ENCODE measurements at regions of chr11 and their contacts with region 1.

Region 1: DNA sequence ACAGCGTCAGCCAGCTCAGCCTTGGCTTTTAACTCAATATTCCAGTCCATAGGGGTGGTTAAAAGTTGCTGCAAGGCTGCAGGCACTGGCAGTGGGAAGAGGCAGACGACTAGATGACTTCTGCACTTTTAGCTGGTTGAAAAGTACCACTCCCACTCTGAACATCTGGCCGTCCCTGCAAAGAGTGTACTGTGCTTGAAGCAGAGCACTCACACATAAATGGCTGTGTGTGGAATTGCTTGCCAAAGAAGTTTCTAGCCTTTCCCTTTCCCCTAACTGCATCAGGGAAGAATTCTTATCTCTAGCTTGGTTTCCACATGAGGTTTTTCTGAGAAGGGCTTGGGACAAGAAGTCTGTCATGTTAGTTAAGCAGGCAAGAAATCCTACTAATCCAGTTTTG is 5.1 kb upstream of the PHLDB1 start:
- DNase-seq: no peak
- H3K4me3 ChIP-seq: no peak overlapping the region
- H3K27ac ChIP-seq: no peak overlapping the region
- H3K4me1 ChIP-seq: no peaks in the 10 kb centered on the region
- H3K27me3 ChIP-seq: no peaks in the 10 kb centered on the region
- CTCF ChIP-seq: no peak

Region 2: DNA sequence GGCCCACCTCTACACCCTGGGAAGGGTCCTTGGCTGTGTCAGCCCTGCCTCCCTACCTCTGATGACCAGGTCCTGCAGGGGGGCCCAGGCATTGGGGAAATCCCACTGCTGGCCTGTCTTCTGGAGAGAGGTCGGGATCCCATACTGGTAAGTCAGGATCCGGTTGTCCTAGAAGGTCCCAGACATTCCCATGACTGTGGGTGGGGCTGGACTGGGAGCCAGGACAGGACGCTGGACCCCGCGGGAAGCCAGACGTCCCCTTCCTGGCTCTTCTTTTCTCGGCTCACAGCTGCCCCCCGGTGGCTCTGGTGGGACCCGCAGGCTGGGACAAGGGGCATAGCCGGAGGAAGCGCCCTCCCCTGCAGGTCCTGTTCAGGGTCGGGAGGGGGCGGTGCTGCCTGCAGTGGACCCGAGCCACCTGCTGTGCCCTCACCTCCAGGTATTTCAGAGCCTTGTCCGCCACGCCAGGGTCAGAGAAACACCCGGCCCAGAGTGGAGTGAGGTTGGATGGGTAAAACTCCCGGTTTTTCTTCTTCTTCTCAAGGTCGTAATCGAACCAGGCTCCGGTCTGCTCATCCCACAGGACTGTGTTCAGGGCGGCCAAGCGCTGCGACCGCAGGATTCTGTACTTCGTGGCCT is 57.1 kb after region 1 on chr11:
- intact Hi-C with region 1: loop called (anchors 5 kb)
- DNase-seq: peak; percentile 96
- H3K4me3 ChIP-seq: no peak overlapping the region
- H3K27ac ChIP-seq: no peak overlapping the region
- H3K4me1 ChIP-seq: peaks cover 4% of the 10 kb centered on the region
- H3K27me3 ChIP-seq: no peaks in the 10 kb centered on the region
- CTCF ChIP-seq: peak; percentile 99